ENCODE measurements at regions of chr9 and their contacts with region 1.

Region 1: DNA sequence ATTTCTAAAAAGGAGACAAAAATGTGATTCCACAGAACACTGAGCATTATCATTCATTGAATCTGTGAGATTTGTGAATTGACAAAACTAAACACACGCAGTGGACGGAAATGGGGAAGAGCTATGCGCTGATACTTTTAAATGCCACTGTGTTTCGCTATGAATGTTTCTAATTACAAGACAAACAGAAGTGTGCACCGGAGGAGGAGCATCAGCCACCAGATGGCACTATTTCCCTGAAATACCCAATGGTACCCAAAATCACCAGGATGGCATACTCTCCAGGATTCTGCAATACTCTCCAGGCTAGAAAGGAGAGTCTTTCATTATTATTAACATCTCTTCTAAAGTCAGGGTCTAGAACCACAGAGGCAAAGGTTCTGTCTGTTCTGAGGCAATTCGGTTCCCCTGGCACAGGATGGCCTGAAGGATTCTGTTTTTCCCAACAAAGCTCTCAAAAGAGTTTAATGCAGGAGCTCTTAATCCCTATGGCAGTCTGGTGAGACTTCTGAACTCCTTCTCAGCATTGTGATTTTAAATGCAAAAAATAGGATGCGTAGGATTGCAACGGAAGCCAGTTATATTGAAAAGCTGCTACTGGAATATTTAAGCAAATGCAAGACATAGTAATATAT is 13.8 kb upstream of the PUM3 start:
- DNase-seq: peak; percentile 55
- H3K4me3 ChIP-seq: no peak overlapping the region
- H3K27ac ChIP-seq: no peak overlapping the region
- H3K4me1 ChIP-seq: no peaks in the 10 kb centered on the region
- H3K27me3 ChIP-seq: no peaks in the 10 kb centered on the region
- CTCF ChIP-seq: peak; percentile 62 to 75 (median 68)
- POLR2A ChIP-seq: no peak

Region 2: GRCh38 chr9:3285365-3286161 is 427.9 kb after region 1 on chr9:
- intact Hi-C with region 1: loop called (anchors 5 kb)
- DNase-seq: no peak
- H3K4me3 ChIP-seq: no peak overlapping the region
- H3K27ac ChIP-seq: no peak overlapping the region
- H3K4me1 ChIP-seq: no peaks in the 10 kb centered on the region
- H3K27me3 ChIP-seq: no peaks in the 10 kb centered on the region
- CTCF ChIP-seq: no peak
- POLR2A ChIP-seq: no peak